Mammary epithelial cell (primary cell): ENCODE measurements at regions of chr18 and their contacts with region 1.

Region 1: GRCh38 chr18:54558609-54559585 is 32.1 kb upstream of the DYNAP start:
- DNase-seq: peak; percentile 4
- H3K4me3 ChIP-seq: no peak overlapping the region
- H3K27ac ChIP-seq: no peak overlapping the region
- H3K4me1 ChIP-seq: no peaks in the 10 kb centered on the region
- H3K27me3 ChIP-seq: no peaks in the 10 kb centered on the region
- CTCF ChIP-seq: peak; percentile 73 to 76

Region 2: GRCh38 chr18:54983041-54983686 is 424.3 kb after region 1 on chr18:
- CTCF ChIA-PET with region 1: no interaction called
- dilution Hi-C with region 1: no loop called
- in situ Hi-C with region 1: no loop called
- intact Hi-C with region 1: loop called (anchors 2 kb)
- DNase-seq: peak; percentile 48
- H3K4me3 ChIP-seq: no peak overlapping the region
- H3K27ac ChIP-seq: no peak overlapping the region
- H3K4me1 ChIP-seq: no peaks in the 10 kb centered on the region
- H3K27me3 ChIP-seq: no peaks in the 10 kb centered on the region
- CTCF ChIP-seq: peak; percentile 52 to 62